Caco-2 (cell line): ENCODE measurements at regions of chr11 and their contacts with region 1.

Region 1: DNA sequence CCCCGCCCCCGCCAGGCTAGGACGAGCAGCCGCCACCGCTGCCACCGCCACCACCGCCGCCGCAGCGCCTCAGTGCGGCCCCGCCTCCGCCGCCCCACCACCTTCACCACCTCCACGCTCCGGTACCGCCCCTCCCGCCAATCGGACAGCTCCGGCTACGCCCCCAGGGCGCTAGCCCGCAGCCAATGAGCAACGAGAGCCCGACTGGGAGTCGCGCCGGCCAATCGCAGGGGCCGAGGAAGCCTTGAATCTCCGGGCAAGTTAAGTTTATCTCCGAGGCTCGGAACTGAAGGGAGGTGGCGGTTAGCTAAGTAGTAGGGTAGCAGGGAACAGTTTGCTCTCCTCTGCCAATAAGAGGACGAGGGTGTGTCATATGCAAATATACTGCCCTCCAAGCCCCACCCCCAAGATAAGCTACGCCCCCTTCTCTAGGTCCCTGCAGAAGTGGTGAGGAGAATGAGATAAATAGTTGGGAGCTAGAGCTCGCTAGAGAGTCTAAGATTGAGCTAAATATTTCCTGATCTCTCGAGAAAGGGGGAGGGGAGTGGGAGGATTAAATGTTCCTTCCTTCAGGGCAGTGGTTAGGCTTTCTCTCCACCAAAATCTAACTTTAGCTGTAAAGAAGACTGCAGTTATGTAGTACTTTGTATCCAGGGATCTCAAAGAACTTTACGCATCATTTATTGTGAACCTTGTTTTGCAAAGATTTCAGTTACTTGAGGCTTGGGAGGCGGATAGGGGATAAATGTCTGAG is at the start of gene SESN3:
- DNase-seq: peak; percentile 100
- H3K4me3 ChIP-seq: peak within 1 kb of the TSS; percentile 86
- H3K4me3 Mint-ChIP-seq: no peak within 1 kb of the TSS
- H3K27ac Mint-ChIP-seq: peak within 1 kb of the TSS; percentile 29
- H3K4me1 ChIP-seq: peaks cover 7% of the 10 kb centered on the region; the same call in 1 of the 2 replicates
- H3K4me1 Mint-ChIP-seq: peaks cover 6% of the 10 kb centered on the region
- H3K27me3 ChIP-seq: no peaks in the 10 kb centered on the region
- H3K27me3 Mint-ChIP-seq: no peaks in the 10 kb centered on the region
- CTCF ChIP-seq: no peak
- total RNA-seq, gene SESN3: 28.2 and 29.2 TPM in 2 replicates

Region 2: DNA sequence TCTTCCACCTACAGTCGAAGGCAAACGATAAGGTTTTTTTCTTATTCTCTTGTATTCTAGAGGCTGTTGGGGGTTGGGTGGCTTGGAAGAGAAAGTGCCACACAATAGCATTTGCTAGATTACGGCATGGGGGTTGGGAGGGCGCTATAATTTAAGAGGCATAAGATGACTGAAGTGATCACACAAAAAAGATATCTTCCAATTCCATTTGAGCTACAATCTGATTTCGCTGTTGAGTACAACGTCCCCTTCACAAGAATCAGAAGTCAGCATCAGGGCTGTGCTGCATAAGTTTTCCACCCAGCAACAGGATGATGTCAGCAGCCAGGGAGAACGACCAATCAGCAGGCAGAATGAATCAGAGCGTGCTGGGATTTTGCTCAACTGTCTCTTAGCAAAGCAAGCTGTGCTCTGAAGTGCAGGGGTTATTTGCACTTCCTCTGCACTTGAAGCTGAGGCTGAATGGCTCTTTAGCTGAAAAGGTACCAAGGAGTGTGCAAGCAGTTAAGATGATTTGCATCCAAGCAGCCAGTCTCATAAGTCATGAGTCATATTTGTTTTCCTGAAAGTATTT is 22.9 kb after region 1 on chr11:
- CTCF ChIA-PET with region 1: interaction called, 6 read pairs
- POLR2A ChIA-PET with region 1: interaction called, 3 read pairs
- intact Hi-C with region 1: loop called (anchors 1 kb)
- DNase-seq: peak; percentile 77 to 81
- H3K4me3 ChIP-seq: peak overlapping the region; percentile 1; the same call in 1 of the 2 replicates
- H3K4me3 Mint-ChIP-seq: peak overlapping the region; percentile 67
- H3K27ac Mint-ChIP-seq: no peak overlapping the region
- H3K4me1 ChIP-seq: peaks cover 42% of the 10 kb centered on the region
- H3K4me1 Mint-ChIP-seq: peaks cover 30% of the 10 kb centered on the region
- H3K27me3 ChIP-seq: no peaks in the 10 kb centered on the region
- H3K27me3 Mint-ChIP-seq: no peaks in the 10 kb centered on the region
- CTCF ChIP-seq: no peak

Region 3: GRCh38 chr11:95289378-95290101 is 58.2 kb after region 1 on chr11:
- CTCF ChIA-PET with region 1: no interaction called
- POLR2A ChIA-PET with region 1: no interaction called
- intact Hi-C with region 1: no loop called
- DNase-seq: no peak
- H3K4me3 ChIP-seq: no peak overlapping the region
- H3K4me3 Mint-ChIP-seq: no peak overlapping the region
- H3K27ac Mint-ChIP-seq: no peak overlapping the region
- H3K4me1 ChIP-seq: peaks cover 7% of the 10 kb centered on the region; the same call in 1 of the 2 replicates
- H3K4me1 Mint-ChIP-seq: peaks cover 8% of the 10 kb centered on the region
- H3K27me3 ChIP-seq: no peaks in the 10 kb centered on the region
- H3K27me3 Mint-ChIP-seq: no peaks in the 10 kb centered on the region
- CTCF ChIP-seq: no peak

Region 4: DNA sequence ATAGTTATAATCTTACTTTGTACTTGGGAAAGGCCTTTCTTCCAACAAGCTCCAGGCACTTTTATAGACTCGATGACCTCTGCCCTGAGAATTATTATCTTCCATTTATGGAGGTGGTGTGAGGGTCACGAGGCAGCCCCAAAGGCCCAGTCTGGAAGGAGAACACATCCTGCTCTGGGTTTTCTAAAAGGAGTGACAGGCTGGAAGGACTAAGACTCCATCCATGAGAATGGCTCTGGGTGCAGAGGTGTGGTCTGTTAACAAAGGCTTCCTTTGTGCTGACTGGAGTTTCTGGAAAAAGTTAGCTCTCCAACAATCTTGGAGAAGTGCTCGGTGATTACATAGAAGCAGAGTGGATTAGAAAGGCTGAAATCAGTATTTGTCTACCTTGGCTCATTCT is 74.4 kb after region 1 on chr11:
- CTCF ChIA-PET with region 1: interaction called, 13 read pairs
- POLR2A ChIA-PET with region 1: interaction called, 3 read pairs
- intact Hi-C with region 1: no loop called
- DNase-seq: no peak
- H3K4me3 ChIP-seq: no peak overlapping the region
- H3K4me3 Mint-ChIP-seq: no peak overlapping the region
- H3K27ac Mint-ChIP-seq: no peak overlapping the region
- H3K4me1 ChIP-seq: no peaks in the 10 kb centered on the region
- H3K4me1 Mint-ChIP-seq: no peaks in the 10 kb centered on the region
- H3K27me3 ChIP-seq: no peaks in the 10 kb centered on the region
- H3K27me3 Mint-ChIP-seq: no peaks in the 10 kb centered on the region
- CTCF ChIP-seq: no peak

Region 5: DNA sequence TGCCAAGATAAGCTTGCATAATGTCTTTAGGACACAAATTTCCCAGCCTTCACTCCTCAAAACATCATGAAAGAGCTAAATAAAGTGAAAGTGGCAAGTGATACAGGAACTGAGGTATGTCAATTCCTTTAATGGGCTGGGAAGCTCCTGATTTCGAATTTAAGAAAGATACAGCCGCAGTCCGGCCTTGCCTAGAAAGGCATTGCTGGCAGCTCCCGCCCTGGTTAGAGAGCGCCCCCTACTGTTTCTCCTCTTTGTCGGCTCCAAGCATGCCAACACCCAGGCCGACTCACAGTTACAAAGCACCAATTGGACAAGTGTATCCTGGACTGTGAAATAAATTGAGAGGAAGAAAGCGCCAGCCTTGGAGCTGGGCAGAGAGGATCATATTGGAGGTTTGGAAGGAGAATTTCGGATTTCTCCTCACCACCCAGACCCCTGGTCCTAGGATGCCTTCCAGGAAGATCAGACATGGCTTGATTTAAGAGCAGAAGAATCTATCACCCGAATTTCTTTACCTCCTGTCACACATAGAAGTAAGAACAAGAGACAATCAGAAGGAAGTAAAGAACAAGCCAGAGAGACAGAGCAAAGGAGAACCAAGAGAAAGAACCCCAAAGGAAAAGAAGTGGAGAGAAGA is 474.3 kb after region 1 on chr11:
- CTCF ChIA-PET with region 1: interaction called, 8 read pairs
- POLR2A ChIA-PET with region 1: interaction called, 3 read pairs
- intact Hi-C with region 1: loop called (anchors 1 kb)
- DNase-seq: peak; percentile 85 to 89
- H3K4me3 ChIP-seq: no peak overlapping the region
- H3K4me3 Mint-ChIP-seq: no peak overlapping the region
- H3K27ac Mint-ChIP-seq: no peak overlapping the region
- H3K4me1 ChIP-seq: peaks cover 38% of the 10 kb centered on the region
- H3K4me1 Mint-ChIP-seq: peaks cover 24% of the 10 kb centered on the region
- H3K27me3 ChIP-seq: no peaks in the 10 kb centered on the region
- H3K27me3 Mint-ChIP-seq: no peaks in the 10 kb centered on the region
- CTCF ChIP-seq: peak; percentile 93 to 94

Region 6: GRCh38 chr11:95790123-95790932 is 559.0 kb after region 1 on chr11 and contains the start of gene CEP57:
- CTCF ChIA-PET with region 1: interaction called, 6 read pairs
- POLR2A ChIA-PET with region 1: interaction called, 18 read pairs
- intact Hi-C with region 1: loop called (anchors 1 kb)
- DNase-seq: peak; percentile 99
- H3K4me3 ChIP-seq: peak within 1 kb of the TSS; percentile 72
- H3K4me3 Mint-ChIP-seq: peak within 1 kb of the TSS; percentile 72
- H3K27ac Mint-ChIP-seq: peak within 1 kb of the TSS; percentile 100
- H3K4me1 ChIP-seq: peaks cover 19% of the 10 kb centered on the region; the same call in 1 of the 2 replicates
- H3K4me1 Mint-ChIP-seq: peaks cover 23% of the 10 kb centered on the region
- H3K27me3 ChIP-seq: no peaks in the 10 kb centered on the region
- H3K27me3 Mint-ChIP-seq: no peaks in the 10 kb centered on the region
- CTCF ChIP-seq: no peak
- total RNA-seq, gene CEP57: 117 and 125 TPM in 2 replicates